GM10248 (cell line): ENCODE measurements at regions of chr3 and their contacts with region 1.

Region 1: GRCh38 chr3:72665701-72666443 is 182.4 kb downstream of the SHQ1 start:
- DNase-seq: peak; percentile 61
- CTCF ChIP-seq: peak; percentile 35

Region 2: DNA sequence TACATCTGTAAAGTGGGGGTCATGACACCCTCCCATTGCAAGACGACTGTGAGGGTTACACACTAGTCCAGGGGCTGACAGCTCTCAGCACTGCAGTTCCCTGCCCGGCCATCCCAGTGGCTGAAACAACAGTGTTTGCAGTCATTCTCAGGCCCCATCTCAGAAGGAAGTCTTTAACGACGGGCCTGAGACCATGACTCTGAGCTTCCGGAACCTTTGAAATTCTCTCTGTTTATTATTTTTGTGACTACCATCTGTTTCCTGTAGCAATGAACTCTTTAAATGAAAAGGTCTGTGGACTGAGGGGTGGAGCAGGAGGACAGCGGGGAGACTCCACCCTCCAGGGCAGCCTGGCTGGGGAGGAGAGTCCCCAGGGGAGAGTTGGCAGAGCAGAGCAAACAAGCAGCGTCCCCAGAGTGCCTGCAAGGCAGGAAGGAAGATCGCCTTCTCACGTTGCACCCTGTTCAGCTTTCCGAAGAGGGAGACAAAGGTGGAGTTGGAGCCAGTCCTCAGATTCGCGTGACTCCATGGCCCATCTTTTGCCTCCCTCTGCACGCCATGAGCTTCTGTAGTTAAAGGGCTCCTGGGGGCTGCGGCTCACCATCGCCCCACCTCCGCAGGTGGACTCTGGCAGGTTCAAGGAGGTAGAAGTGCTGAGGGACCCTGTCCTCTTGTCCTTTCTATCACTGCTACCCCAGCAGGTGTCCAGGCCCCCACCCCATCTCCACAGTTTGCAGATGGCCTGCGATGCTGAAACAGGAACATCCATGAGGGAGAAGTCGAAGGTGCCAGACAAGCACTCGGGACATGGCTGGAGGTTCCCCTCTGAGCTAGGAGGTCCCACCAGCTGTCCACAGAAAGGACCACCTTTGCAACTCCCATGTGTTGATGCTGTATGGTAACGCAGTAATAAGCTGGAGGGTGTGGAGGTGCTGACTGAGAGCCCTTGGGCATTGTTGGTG is 355.2 kb before region 1 on chr3:
- CTCF ChIA-PET with region 1: no interaction called
- POLR2A ChIA-PET with region 1: no interaction called
- DNase-seq: peak; percentile 76
- CTCF ChIP-seq: no peak

Region 3: DNA sequence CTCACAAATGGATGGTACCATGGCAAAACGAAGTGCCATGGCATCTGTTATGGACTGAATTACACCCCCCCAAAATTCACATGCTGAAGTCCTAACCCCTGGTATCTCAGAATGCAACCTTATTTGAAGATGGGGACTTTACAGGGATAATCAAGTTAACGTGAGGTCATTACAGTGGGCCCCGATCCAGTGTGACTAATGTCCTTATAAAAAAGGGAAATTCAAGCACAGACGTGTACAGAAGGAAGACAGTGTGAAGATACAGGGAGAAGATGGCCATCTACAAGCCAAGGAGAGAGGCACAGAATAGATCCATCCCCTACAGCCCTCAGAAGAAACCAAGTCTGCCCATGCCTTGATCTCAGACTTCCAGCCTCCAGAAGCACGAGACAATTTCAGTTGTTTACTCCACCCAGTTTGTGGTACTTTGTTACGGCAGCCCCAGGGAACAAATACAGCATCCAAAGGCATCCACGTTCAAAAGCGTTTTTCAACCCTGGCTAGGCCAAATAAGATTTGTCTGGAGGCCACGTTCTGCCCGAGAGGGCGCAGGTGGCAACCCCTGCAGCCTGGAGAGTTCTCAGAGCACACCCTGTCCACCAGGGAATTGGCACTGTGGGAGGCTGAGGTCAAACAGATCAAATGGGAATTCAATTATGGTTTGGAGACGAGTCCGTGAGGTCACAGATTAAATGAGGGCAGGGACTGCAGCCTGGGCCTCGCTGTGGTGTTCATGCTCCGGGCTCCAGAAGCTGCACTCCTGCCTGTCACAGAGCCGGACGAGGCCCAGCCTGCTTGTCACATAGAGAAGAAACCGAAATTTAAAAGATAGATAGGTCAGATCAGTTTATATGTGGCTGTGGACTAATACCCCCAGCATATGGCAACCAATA is 312.4 kb before region 1 on chr3:
- CTCF ChIA-PET with region 1: no interaction called
- POLR2A ChIA-PET with region 1: no interaction called
- DNase-seq: no peak
- CTCF ChIP-seq: no peak

Region 4: GRCh38 chr3:72623386-72623785 is 42.5 kb before region 1 on chr3:
- CTCF ChIA-PET with region 1: interaction called, 10 read pairs
- POLR2A ChIA-PET with region 1: no interaction called
- DNase-seq: no peak
- CTCF ChIP-seq: no peak

Region 5: DNA sequence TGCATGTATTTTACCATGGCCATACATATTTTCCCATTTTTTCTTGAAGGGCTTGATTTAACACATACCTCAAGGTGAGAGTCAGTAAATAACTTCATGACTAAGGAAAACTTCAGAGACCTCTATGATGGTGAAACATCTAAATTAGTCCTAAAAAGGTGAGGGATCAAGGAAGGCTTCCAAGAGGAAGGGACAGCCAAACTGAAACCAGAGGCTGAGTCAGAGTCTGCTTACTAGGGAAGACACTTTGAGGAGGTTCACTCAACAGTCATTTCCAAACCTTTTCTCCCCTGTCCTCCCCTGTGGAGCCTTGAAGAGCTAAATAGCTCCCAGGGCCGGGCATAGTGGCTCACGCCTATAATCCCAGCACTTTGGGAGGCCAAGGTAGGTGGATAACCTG is 24.2 kb before region 1 on chr3:
- CTCF ChIA-PET with region 1: interaction called, 31 read pairs
- POLR2A ChIA-PET with region 1: no interaction called
- DNase-seq: no peak
- CTCF ChIP-seq: no peak

Region 6: GRCh38 chr3:72679540-72680198 is 13.8 kb after region 1 on chr3:
- CTCF ChIA-PET with region 1: interaction called, 21 read pairs
- POLR2A ChIA-PET with region 1: no interaction called
- DNase-seq: no peak
- CTCF ChIP-seq: no peak

Region 7: DNA sequence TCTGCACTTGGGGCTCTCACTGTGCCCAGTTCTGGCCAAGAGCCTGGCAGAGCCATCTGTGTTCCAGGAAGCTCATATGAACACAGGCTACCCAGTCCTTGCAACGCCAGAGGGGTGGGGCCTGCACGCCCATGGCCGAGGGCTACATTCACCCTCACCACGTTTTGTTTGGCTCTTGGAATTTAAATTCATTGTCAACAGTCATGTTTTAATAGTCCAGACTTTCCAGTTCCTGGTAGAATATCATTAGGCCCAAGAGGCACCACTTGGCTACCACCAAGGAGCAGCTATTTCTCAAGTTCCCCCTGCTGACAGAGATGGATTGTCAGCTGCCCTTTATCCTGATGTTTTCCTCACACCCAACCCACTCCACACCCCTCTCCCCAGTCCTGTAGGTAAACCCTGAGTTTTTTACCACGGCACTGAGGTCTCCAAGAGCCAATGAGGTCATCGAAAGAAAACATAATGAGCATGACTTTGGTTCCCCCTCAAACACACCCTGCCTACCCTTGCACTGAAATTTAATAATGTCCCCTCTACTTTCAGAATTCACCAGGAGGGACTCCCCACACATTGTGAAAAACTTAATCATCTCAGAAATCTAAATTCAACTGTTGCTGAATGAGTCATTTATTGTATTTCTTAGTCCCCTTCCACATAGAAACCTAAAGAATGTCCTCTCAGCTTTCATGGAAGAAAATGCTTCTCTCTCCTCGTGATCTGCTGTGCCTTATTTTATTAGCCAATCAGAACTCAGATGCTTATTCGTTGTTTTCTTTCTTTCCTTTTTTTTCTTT is 57.3 kb after region 1 on chr3:
- CTCF ChIA-PET with region 1: interaction called, 11 read pairs
- POLR2A ChIA-PET with region 1: no interaction called
- DNase-seq: peak; percentile 30
- CTCF ChIP-seq: no peak

Region 8: DNA sequence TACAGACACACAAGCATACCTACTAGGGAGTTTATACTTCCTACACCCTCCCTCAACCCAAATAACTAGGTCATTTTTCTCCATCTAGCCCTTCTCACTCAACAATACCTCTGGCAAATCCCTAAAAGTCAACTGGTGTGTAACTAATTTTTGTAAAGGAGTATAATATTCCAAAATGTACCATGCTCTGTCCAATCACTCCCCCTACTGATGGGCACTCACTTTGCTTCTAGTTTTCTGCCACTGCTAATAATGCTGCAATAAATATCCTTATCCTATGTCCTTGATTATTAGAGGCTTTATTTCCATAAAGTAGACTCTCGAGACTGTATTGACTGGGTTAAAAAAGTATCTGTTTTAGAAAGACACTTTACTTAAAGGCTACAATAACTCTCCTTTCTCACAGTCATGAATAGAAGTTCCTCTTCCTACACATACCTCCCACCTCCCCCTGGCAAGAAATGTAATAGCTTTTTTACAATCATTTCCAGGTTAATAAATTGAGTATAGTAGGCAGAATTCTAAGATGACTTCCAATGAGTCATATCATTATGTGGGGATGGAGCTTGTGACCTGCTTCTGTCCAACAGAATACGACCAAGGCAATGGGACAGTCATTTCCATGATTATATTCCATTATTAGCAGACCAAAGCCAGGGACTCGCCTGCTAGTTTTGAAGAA is 152.4 kb after region 1 on chr3:
- CTCF ChIA-PET with region 1: interaction called, 101 read pairs
- POLR2A ChIA-PET with region 1: no interaction called
- DNase-seq: no peak
- CTCF ChIP-seq: peak; percentile 73